PC-9 (cell line): ENCODE measurements at regions of chr2 and their contacts with region 1.

Region 1: DNA sequence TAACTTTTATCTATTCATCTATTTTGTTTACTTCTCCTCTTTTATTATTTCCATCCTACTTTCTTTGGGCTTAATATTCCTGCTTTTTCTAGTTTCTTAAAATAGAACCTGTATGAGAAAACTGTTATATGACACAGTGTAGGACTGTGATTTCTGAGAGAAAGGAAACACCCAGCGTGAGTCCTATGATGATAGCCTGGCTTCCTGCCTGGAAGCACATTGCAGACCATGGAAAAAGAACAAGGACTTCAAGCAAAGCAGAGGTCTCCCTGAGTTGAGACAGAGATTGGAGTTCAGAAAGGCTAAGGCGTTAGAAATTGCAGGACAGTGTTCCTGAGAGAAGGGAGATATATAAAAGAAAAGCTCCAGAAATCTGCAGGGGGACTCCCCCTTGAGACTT is 7.8 kb downstream of the RBM44 start:
- DNase-seq: no peak
- H3K4me3 ChIP-seq: no peak overlapping the region
- H3K27ac ChIP-seq: no peak overlapping the region
- H3K4me1 ChIP-seq: no peaks in the 10 kb centered on the region
- H3K27me3 ChIP-seq: no peaks in the 10 kb centered on the region
- CTCF ChIP-seq: no peak

Region 2: GRCh38 chr2:237731663-237732062 is 74.7 kb before region 1 on chr2:
- CTCF ChIA-PET with region 1: no interaction called
- POLR2A ChIA-PET with region 1: no interaction called
- intact Hi-C with region 1: no loop called
- DNase-seq: peak; percentile 69 to 77
- H3K4me3 ChIP-seq: no peak overlapping the region
- H3K27ac ChIP-seq: peak overlapping the region; percentile 6; the same call in 1 of the 2 replicates
- H3K4me1 ChIP-seq: peaks cover 31% of the 10 kb centered on the region
- H3K27me3 ChIP-seq: no peaks in the 10 kb centered on the region
- CTCF ChIP-seq: no peak

Region 3: DNA sequence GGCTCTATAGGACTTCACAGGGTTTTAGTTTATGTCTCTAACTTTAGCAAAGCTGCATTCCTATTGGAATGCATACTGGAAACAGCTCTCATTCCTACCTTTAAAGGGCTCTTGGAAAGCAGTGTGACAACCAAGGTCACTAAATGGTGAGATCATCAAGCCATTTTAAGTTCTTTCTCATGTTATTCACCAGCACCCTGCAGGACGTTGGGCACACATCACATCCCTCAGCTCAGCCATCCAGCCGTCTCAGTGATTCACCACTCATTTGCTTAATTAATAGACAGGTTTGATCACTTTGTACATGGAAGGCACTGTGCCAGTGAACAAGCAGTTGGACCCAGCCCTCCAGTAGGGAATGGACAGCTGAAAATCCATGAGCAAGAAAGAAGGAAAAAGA is 40.0 kb before region 1 on chr2:
- CTCF ChIA-PET with region 1: no interaction called
- POLR2A ChIA-PET with region 1: interaction called, 36 read pairs
- intact Hi-C with region 1: no loop called
- DNase-seq: no peak
- H3K4me3 ChIP-seq: no peak overlapping the region
- H3K27ac ChIP-seq: no peak overlapping the region
- H3K4me1 ChIP-seq: no peaks in the 10 kb centered on the region; the same call in 1 of the 2 replicates
- H3K27me3 ChIP-seq: no peaks in the 10 kb centered on the region
- CTCF ChIP-seq: no peak